ENCODE measurements at regions of chr16 and their contacts with region 1.

Region 1: DNA sequence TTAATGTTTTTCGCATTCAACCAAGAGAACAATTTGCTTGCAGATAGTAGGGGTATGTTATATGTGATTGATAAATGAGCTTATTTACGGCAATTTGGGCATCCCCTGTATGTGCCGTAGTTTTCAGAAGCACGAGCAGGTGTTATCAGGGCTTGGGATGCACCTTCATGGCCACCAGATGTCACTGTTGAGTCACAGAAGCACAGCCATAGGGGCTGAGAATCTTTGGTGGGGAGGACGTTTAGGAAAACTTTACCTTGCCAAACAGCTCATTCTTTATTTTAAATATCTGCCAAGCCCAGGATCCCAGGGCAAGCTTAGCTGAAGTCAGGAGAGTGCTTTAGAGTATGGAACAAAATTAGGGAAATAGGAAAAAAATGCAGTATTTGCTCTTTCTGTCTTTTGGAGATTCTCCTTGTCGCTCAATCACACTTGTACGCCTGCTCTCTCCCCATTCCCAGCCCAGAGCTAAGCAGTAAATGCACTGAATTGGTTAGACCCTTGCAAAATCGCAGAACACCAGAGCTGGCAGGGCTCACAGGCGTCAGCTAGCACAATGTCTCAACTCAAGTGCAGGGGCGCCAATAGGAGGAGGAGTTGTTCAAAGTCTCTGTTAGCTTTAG is 93.6 kb upstream of the MPHOSPH6 start:
- DNase-seq: peak; percentile 51
- H3K4me3 ChIP-seq: no peak overlapping the region; a peak in 1 of 4 replicates
- H3K27ac ChIP-seq: no peak overlapping the region
- H3K4me1 ChIP-seq: no peaks in the 10 kb centered on the region
- H3K27me3 ChIP-seq: peaks cover 14% of the 10 kb centered on the region
- CTCF ChIP-seq: peak; percentile 97
- EP300 ChIP-seq: no peak
- RAD21 ChIP-seq: peak; percentile 89

Region 2: DNA sequence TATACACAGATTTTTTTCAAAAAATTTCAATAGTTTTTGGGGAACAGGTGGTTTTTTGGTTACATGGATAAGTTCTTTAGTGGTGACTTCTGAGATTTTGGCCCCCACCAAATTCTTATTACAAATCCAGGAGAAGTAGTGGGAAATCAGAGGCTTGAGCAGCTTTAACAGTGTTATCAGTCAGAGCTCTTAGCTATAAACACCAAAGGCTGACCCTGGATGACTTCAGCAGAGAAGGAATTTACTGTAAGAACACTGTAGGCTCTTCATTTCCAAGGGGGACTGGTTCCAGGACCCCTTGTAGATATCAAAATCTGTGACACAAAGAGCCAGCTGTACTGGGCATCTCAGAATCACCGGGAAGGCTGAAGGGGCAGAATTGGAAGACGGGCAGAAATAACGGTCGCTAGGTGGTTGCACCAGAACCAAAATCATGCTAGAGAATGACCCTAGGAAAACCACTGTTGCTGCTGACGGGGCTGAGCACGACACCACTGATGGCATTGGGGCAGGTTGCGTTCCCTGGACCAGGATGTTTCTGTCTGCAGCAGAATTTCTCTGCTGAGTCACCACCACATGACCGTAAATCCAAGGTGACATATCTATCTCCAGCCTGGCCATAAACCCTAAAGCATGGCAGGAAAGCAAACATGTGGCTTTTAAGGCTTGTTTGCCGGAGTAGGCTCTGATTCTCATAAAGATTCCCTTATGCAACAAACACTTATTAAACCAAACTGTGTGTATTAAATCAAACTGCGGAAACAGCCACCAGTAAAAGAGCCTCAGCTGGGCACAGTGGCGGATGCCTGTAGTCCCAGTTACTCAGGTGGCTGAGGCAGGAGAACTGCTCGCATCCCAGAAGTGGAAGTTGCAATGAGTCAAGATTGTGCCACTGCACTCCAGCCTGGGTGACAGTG is 111.2 kb before region 1 on chr16:
- CTCF ChIA-PET with region 1: no interaction called
- POLR2A ChIA-PET with region 1: no interaction called
- DNase-seq: no peak
- H3K4me3 ChIP-seq: no peak overlapping the region
- H3K27ac ChIP-seq: no peak overlapping the region
- H3K4me1 ChIP-seq: no peaks in the 10 kb centered on the region
- H3K27me3 ChIP-seq: no peaks in the 10 kb centered on the region
- CTCF ChIP-seq: no peak
- EP300 ChIP-seq: no peak
- RAD21 ChIP-seq: no peak

Region 3: DNA sequence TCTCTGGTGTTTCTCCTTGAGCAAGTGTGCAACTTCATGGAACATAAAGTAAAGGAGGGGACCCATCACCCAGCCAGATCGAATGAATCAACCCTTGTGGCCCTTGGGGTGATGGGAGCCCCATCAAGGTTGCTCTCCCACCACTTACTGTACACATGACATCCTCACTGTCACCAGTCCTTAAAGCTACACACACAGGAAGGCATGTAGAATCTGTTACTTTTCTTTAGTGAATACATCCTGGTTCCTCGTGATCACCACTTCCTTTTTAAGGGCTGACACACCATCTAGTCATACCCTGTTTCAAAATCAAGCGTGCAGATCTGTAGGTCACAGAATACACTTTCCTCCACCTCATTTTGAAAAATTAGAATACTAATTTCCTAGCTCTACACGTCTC is 71.0 kb before region 1 on chr16:
- CTCF ChIA-PET with region 1: no interaction called
- POLR2A ChIA-PET with region 1: no interaction called
- DNase-seq: no peak
- H3K4me3 ChIP-seq: no peak overlapping the region
- H3K27ac ChIP-seq: no peak overlapping the region
- H3K4me1 ChIP-seq: no peaks in the 10 kb centered on the region
- H3K27me3 ChIP-seq: no peaks in the 10 kb centered on the region
- CTCF ChIP-seq: no peak
- EP300 ChIP-seq: no peak
- RAD21 ChIP-seq: no peak

Region 4: GRCh38 chr16:82240111-82240510 is 23.5 kb before region 1 on chr16:
- CTCF ChIA-PET with region 1: interaction called, 15 read pairs
- POLR2A ChIA-PET with region 1: no interaction called
- DNase-seq: no peak
- H3K4me3 ChIP-seq: no peak overlapping the region
- H3K27ac ChIP-seq: no peak overlapping the region
- H3K4me1 ChIP-seq: no peaks in the 10 kb centered on the region
- H3K27me3 ChIP-seq: 0 out of 2 replicates have a peak, but pooled peaks cover 2% of the 10 kb centered on the region
- CTCF ChIP-seq: no peak
- EP300 ChIP-seq: no peak
- RAD21 ChIP-seq: no peak

Region 5: DNA sequence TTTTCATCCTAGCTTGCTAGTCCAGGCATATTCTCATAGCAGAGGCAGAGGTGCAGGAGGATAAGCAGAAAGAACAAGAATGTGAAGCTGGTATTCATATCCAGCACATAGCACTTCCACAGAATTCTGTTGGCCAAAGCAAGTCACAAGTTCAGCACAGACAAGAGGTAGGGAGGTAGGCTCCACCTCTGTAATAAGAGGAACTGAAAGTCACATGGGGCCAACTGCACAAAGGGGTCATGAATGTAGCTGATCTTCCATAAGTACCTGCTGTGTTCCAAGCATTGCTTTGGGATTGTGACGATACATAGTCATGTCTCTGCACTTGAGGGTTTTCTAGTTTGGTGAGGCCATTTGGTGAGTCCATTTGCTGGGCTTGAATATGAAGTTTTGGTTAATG is 17.2 kb after region 1 on chr16:
- CTCF ChIA-PET with region 1: interaction called, 14 read pairs
- POLR2A ChIA-PET with region 1: no interaction called
- DNase-seq: no peak
- H3K4me3 ChIP-seq: no peak overlapping the region
- H3K27ac ChIP-seq: no peak overlapping the region
- H3K4me1 ChIP-seq: no peaks in the 10 kb centered on the region
- H3K27me3 ChIP-seq: no peaks in the 10 kb centered on the region; the same call in 1 of the 2 replicates
- CTCF ChIP-seq: no peak
- EP300 ChIP-seq: no peak
- RAD21 ChIP-seq: no peak

Region 6: GRCh38 chr16:82313754-82314153 is 50.1 kb after region 1 on chr16:
- CTCF ChIA-PET with region 1: interaction called, 12 read pairs
- POLR2A ChIA-PET with region 1: no interaction called
- DNase-seq: no peak
- H3K4me3 ChIP-seq: no peak overlapping the region
- H3K27ac ChIP-seq: no peak overlapping the region
- H3K4me1 ChIP-seq: no peaks in the 10 kb centered on the region
- H3K27me3 ChIP-seq: no peaks in the 10 kb centered on the region
- CTCF ChIP-seq: no peak
- EP300 ChIP-seq: no peak
- RAD21 ChIP-seq: no peak

Region 7: GRCh38 chr16:82456683-82457082 is 193.1 kb after region 1 on chr16:
- CTCF ChIA-PET with region 1: interaction called, 56 read pairs
- POLR2A ChIA-PET with region 1: interaction called, 3 read pairs
- DNase-seq: peak; percentile 69
- H3K4me3 ChIP-seq: no peak overlapping the region; a peak in 1 of 4 replicates
- H3K27ac ChIP-seq: no peak overlapping the region
- H3K4me1 ChIP-seq: no peaks in the 10 kb centered on the region
- H3K27me3 ChIP-seq: peaks cover 19% of the 10 kb centered on the region; the same call in 1 of the 2 replicates
- CTCF ChIP-seq: peak; percentile 76
- EP300 ChIP-seq: no peak
- RAD21 ChIP-seq: peak; percentile 71

Region 8: DNA sequence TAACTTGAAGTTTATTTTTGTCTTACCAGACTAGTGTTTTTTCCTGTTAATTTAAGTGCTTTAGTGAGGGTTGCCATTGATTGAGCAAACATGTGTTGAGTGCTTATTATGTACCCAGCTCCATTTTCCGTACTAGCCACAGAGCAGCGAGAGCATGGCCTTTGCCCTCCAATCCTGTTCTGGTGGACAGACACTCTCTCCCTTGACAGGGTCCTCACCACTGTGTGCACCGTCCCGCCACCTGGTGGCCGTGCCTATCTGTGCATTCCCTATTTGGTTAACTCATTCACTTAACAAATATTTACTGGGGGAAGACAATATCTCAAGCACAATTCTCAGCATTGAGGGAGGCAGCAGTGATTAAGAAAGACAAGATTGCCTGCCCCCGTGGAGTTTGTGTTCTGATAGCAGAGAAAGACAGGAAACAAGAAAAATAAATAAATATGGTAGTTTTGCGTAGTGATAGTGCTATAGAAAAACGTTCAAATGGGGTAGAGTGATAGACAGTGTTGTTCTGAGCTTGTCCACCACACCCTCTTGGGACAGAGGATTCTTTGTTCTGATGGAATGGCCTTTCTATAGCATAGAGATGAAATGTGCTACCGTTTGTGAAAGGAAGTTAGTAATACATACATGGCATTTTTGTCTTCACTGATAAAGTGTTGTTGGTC is 376.2 kb after region 1 on chr16:
- CTCF ChIA-PET with region 1: interaction called, 24 read pairs
- POLR2A ChIA-PET with region 1: no interaction called
- DNase-seq: peak; percentile 68
- H3K4me3 ChIP-seq: no peak overlapping the region; a peak in 1 of 4 replicates
- H3K27ac ChIP-seq: peak overlapping the region in 1 of 2 experiments; percentile 89; a peak in 2 of 4 replicates
- H3K4me1 ChIP-seq: peaks cover 0 to 19% of the 10 kb centered on the region in 2 experiments; a peak in 2 of 4 replicates
- H3K27me3 ChIP-seq: no peaks in the 10 kb centered on the region
- CTCF ChIP-seq: peak; percentile 87
- EP300 ChIP-seq: no peak
- RAD21 ChIP-seq: peak; percentile 71